AG04450 (cell line): ENCODE measurements at regions of chr1 and their contacts with region 1.

Region 1: GRCh38 chr1:11012250-11013171 is at the start of gene TARDBP:
- DNase-seq: peak; percentile 70
- H3K4me3 ChIP-seq: peak within 1 kb of the TSS; percentile 91
- H3K27ac ChIP-seq: peak within 1 kb of the TSS; percentile 92
- H3K27me3 ChIP-seq: no peaks in the 10 kb centered on the region
- CTCF ChIP-seq: no peak
- polyA plus RNA-seq, gene TARDBP: 148 and 218 TPM in 2 replicates

Region 2: GRCh38 chr1:10901086-10901890 is 111.2 kb before region 1 on chr1:
- CTCF ChIA-PET with region 1: no interaction called
- POLR2A ChIA-PET with region 1: no interaction called
- DNase-seq: no peak
- H3K4me3 ChIP-seq: no peak overlapping the region
- H3K27ac ChIP-seq: no peak overlapping the region
- H3K27me3 ChIP-seq: peaks cover 14% of the 10 kb centered on the region
- CTCF ChIP-seq: no peak

Region 3: DNA sequence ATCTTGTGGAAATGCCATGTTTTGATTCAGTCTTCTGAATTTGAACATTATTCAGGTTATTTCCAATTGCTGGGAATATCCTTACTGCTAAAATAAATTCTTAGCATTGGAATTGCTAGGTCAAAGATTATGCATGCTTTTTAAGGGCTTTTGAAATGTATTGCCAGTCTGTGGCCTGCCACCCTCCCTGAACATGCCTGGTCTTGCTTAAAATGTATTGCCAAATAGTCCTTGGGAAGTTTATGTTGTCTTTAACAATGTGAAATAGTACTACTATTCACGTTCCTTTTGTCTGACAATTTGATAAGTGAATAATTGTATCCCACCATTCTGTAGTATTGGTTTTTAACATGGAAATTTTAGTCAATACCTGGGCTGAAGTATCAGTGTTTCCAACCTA is 13.5 kb after region 1 on chr1:
- CTCF ChIA-PET with region 1: no interaction called
- POLR2A ChIA-PET with region 1: interaction called, 12 read pairs
- DNase-seq: no peak
- H3K4me3 ChIP-seq: no peak overlapping the region
- H3K27ac ChIP-seq: no peak overlapping the region
- H3K27me3 ChIP-seq: no peaks in the 10 kb centered on the region
- CTCF ChIP-seq: no peak